ENCODE measurements at regions of chr3 and their contacts with region 1.

Region 1: DNA sequence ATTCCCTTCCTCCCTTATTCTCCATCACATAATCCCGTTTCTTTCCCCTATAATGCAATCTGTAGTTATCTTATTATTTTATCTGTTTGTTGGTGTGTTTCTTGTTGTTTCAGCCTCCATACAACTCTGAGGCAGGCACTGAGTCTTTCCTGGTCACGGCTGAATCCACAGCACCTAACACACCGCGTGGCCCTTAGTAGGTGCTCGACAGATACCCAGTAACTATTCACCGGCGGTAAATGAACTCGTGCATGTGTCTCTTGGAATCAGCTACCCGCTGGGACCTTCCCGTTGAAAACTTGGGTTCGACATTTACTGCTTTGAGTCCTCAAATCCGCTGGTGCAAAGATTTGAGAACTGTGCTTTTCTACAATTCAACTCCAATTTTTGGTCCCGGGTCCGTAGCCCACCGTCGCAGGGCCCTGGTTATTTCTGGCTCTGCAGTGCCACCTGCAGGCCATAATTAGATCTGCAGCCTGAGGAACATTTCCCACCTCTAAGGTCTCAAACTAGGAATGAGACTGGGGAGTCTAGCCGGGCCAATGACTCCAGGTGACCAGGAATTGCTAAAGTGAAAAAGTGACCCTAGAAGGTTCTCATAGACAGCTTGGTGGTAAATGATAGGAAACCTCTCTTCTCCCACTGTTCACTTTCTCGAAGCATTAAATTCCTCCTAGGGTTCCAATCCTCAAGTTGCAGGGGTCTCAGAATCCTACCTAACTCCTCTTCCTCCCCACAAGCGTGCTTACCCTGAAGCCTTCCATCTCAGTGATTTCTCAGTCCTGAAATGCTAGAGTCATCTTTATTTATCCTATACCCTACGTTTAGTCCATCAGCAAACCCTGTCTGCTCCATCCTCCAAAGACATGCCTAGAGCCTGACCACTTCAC is 40.0 kb upstream of the TRH start:
- DNase-seq: peak; percentile 41
- ATAC-seq: no peak
- H3K4me3 Mint-ChIP-seq: no peak overlapping the region
- H3K27ac Mint-ChIP-seq: no peak overlapping the region
- H3K4me1 Mint-ChIP-seq: peaks cover 5% of the 10 kb centered on the region
- H3K27me3 Mint-ChIP-seq: peaks cover 2% of the 10 kb centered on the region

Region 2: DNA sequence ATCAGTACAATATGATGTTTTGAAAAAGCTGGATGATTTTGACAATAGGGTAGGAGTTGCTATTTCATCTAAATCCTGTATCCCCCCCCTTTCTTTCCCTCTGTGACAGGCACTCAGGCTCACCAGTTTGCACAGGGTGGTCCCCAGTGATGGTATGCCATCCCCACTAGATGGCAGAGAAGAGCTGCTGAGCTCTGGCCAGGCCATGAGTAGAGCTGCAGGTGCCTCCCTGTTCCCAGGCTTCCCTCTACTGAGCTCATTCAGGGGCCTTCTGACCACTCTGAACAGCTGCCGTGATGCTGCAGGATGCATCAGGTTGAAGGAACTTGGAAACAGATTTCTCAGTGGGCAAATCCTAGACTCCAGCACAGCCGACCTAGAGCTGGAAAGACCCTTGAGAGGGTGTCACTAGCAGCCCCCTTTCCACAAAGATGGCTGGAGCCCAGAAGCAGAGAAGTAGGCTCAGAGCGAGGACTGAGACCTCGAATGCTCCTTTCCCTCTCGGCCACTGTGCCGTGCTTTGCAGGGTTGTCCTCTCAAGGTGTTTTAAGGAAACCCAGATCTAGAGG is 551.1 kb before region 1 on chr3:
- CTCF ChIA-PET with region 1: interaction called, 3 read pairs
- POLR2A ChIA-PET with region 1: no interaction called
- intact Hi-C with region 1: loop called in 1 of 2 experiments (anchors 1 kb)
- DNase-seq: peak; percentile 67
- ATAC-seq: peak; percentile 97
- H3K4me3 Mint-ChIP-seq: no peak overlapping the region
- H3K27ac Mint-ChIP-seq: no peak overlapping the region
- H3K4me1 Mint-ChIP-seq: no peaks in the 10 kb centered on the region
- H3K27me3 Mint-ChIP-seq: no peaks in the 10 kb centered on the region

Region 3: DNA sequence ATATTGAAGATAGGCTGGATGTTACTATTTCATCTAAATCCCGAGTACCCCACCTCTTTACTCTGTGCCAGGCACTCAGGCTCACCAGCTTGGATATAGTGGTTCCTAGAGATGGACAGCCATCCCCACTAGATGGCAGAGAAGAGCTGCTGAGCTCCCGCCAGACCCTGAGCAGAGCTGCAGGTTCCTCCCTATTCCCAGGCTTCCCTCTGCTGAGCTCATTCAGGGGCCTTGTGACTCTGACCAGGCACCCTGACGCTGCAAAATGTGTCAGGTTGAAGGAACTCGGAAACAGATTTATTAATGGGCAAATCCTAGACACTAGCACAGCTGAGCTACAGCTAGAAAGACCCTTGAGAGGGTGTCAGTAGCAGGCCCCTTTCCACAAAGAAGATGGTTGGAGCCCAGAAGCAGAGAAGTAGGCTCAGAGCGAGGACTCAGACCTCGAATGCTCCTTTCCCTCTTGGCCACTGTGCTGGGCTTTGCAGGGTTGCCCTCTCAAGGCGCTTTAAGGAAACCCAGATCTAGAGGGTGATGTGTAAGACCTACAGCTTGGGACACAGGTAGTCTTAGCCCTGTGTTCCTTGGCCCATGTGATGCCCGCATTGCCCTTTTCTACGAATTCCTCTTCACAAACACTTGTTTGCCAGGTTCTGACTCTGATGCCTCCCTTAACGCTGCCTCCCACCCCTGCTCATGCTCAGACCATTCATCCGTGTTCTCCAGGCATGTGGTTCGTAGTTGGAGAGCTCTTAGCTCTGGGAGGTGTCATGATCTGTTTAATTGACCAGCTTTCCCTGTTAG is 444.0 kb before region 1 on chr3:
- CTCF ChIA-PET with region 1: interaction called, 6 read pairs
- POLR2A ChIA-PET with region 1: no interaction called
- intact Hi-C with region 1: loop called (anchors 2 kb)
- DNase-seq: peak; percentile 71
- ATAC-seq: peak; percentile 96
- H3K4me3 Mint-ChIP-seq: no peak overlapping the region
- H3K27ac Mint-ChIP-seq: no peak overlapping the region
- H3K4me1 Mint-ChIP-seq: no peaks in the 10 kb centered on the region
- H3K27me3 Mint-ChIP-seq: no peaks in the 10 kb centered on the region

Region 4: GRCh38 chr3:129650256-129650872 is 284.1 kb before region 1 on chr3:
- CTCF ChIA-PET with region 1: interaction called, 5 read pairs
- POLR2A ChIA-PET with region 1: no interaction called
- intact Hi-C with region 1: loop called (anchors 1 kb)
- DNase-seq: peak; percentile 77
- ATAC-seq: peak; percentile 68
- H3K4me3 Mint-ChIP-seq: no peak overlapping the region
- H3K27ac Mint-ChIP-seq: no peak overlapping the region
- H3K4me1 Mint-ChIP-seq: peaks cover 2% of the 10 kb centered on the region
- H3K27me3 Mint-ChIP-seq: no peaks in the 10 kb centered on the region

Region 5: GRCh38 chr3:131427226-131427625 is 1492.7 kb after region 1 on chr3:
- CTCF ChIA-PET with region 1: no interaction called
- POLR2A ChIA-PET with region 1: no interaction called
- intact Hi-C with region 1: no loop called
- DNase-seq: no peak
- ATAC-seq: no peak
- H3K4me3 Mint-ChIP-seq: no peak overlapping the region
- H3K27ac Mint-ChIP-seq: no peak overlapping the region
- H3K4me1 Mint-ChIP-seq: no peaks in the 10 kb centered on the region
- H3K27me3 Mint-ChIP-seq: no peaks in the 10 kb centered on the region

Measured in activated CD4-positive, alpha-beta T cell treated with anti-CD3 and anti-CD28 coated beads for 36 hours (primary cell).